ENCODE measurements at regions of chr1 and their contacts with region 1.

Region 1: DNA sequence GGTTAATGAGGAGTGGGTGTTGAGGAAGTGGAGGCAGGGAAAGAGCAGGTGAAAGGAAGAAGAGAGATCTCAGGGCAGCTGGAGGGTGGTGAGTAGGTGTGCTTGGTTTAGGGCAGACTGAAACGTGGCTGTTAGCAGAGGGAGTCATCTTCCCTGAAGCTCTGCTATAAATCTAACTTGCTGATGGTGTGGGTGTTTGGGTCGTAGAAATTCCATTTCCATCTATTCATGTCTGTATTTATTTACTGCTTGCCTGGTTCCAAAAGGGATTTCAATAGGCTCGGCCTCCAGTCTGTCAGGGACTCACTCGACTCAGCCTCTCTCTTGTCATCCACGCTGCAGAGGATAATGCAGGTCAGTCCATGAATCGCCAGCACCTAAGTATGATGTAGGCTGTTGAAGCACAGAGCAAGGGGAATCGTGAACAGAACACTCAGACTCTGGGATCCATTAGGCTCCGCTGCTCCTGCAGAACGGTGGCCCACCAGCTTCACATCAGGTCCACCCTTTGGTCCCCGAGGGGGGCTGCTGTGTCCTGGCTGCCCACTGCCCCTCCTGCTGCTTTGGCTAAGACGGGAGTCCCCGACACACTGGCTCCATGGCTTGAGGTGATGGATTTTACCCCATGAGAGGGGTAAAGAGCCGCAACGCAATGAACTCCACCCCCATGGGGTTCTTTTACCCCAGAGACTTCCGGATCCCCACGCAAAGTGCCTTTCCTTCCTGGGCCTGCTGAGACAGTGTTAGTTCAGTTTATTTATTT is 156.2 kb downstream of the RHOU start:
- DNase-seq: no peak
- ATAC-seq: no peak
- H3K4me3 ChIP-seq: no peak overlapping the region
- H3K27ac ChIP-seq: no peak overlapping the region
- H3K4me1 ChIP-seq: peaks cover 16% of the 10 kb centered on the region
- H3K27me3 ChIP-seq: 0 out of 5 replicates have a peak, but pooled peaks cover 0 to 2% of the 10 kb centered on the region in 2 experiments
- CTCF ChIP-seq: no peak
- EP300 ChIP-seq: no peak
- POLR2A ChIP-seq: no peak
- RAD21 ChIP-seq: no peak

Region 2: DNA sequence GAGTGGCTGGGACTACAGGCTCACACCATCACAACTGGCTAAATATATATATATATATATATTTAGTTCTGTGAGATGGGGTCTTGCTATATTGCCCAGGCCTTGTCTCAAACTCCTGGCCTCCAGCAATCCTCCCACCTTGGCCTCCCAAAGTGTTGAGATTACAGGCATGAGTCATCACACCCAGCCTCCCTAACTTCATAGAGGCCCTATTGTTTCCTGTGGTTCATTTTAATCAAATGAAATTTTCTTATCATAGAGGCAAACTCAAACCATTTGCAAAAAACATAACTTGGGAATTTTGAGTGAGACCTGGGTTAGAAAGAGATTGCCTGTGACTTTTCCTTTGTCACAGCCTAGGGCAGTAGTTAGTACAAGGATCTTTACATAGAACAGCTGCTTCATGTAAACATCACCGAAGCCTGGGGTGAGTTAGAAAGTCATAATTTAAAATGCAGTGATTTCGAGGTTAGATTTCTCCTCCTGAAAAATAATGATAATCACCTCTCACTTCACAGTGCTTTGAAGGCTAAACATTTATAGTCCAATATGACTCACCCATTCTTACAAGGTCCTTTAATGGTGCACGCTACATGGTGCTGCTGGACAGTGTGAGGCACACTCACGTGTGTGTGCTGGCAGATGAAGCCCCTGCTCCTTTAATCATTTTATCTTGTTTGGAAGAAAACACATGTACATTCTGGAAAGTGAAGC is 32.7 kb after region 1 on chr1:
- CTCF ChIA-PET with region 1: no interaction called
- POLR2A ChIA-PET with region 1: no interaction called
- in situ Hi-C with region 1: no loop called
- intact Hi-C with region 1: loop called (anchors 1 kb)
- DNase-seq: no peak
- ATAC-seq: no peak
- H3K4me3 ChIP-seq: no peak overlapping the region
- H3K27ac ChIP-seq: no peak overlapping the region
- H3K4me1 ChIP-seq: peaks cover 48% of the 10 kb centered on the region
- H3K27me3 ChIP-seq: no peaks in the 10 kb centered on the region
- CTCF ChIP-seq: no peak
- EP300 ChIP-seq: no peak
- POLR2A ChIP-seq: no peak
- RAD21 ChIP-seq: no peak

Region 3: DNA sequence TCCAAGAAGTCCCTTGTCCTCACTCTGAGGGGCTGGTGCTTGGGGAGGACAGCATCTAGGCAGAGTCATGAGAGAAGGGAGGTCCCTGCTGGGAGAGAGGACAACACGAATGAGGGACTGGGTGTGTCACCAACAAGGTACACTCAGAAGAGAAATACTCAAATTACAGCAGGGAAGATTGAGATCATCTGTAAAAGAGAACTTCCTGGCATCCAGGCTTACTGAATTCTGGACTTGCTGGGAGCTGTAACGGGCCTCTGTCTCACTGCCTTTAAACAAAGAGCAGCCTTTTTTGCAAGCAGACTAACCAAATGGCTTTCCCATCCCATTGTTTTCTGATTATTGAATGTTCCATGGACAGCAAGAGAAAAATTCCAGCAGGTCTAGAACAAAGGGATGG is 183.8 kb after region 1 on chr1:
- CTCF ChIA-PET with region 1: no interaction called
- POLR2A ChIA-PET with region 1: no interaction called
- in situ Hi-C with region 1: no loop called
- intact Hi-C with region 1: no loop called
- DNase-seq: no peak
- ATAC-seq: no peak
- H3K4me3 ChIP-seq: no peak overlapping the region
- H3K27ac ChIP-seq: no peak overlapping the region
- H3K4me1 ChIP-seq: peaks cover 78% of the 10 kb centered on the region
- H3K27me3 ChIP-seq: no peaks in the 10 kb centered on the region
- CTCF ChIP-seq: no peak
- EP300 ChIP-seq: no peak
- POLR2A ChIP-seq: no peak
- RAD21 ChIP-seq: no peak